Activated CD8-positive, alpha-beta memory T cell treated with anti-CD3 and anti-CD28 coated beads, Interleukin-2, amount 10 ng/mL, durations not matched to agents 7 days and 5 days (primary cell): ENCODE measurements at regions of chr4 and their contacts with region 1.

Region 1: GRCh38 chr4:88211473-88212252 is 53.2 kb upstream of the ABCG2 start:
- DNase-seq: peak; percentile 61
- ATAC-seq: peak; percentile 53
- H3K4me3 Mint-ChIP-seq: no peak overlapping the region
- H3K27ac Mint-ChIP-seq: no peak overlapping the region
- H3K4me1 Mint-ChIP-seq: peaks cover 7% of the 10 kb centered on the region
- H3K27me3 Mint-ChIP-seq: peaks cover 10% of the 10 kb centered on the region

Region 2: GRCh38 chr4:87848622-87849351 is 362.9 kb before region 1 on chr4:
- CTCF ChIA-PET with region 1: interaction called, 22 read pairs
- DNase-seq: peak; percentile 54
- ATAC-seq: peak; percentile 94
- H3K4me3 Mint-ChIP-seq: peak overlapping the region; percentile 21
- H3K27ac Mint-ChIP-seq: no peak overlapping the region
- H3K4me1 Mint-ChIP-seq: peaks cover 13% of the 10 kb centered on the region
- H3K27me3 Mint-ChIP-seq: peaks cover 40% of the 10 kb centered on the region

Region 3: GRCh38 chr4:88027611-88028608 is 183.8 kb before region 1 on chr4:
- CTCF ChIA-PET with region 1: interaction called, 64 read pairs
- DNase-seq: no peak
- ATAC-seq: no peak
- H3K4me3 Mint-ChIP-seq: no peak overlapping the region
- H3K27ac Mint-ChIP-seq: no peak overlapping the region
- H3K4me1 Mint-ChIP-seq: peaks cover 10% of the 10 kb centered on the region
- H3K27me3 Mint-ChIP-seq: no peaks in the 10 kb centered on the region

Region 4: DNA sequence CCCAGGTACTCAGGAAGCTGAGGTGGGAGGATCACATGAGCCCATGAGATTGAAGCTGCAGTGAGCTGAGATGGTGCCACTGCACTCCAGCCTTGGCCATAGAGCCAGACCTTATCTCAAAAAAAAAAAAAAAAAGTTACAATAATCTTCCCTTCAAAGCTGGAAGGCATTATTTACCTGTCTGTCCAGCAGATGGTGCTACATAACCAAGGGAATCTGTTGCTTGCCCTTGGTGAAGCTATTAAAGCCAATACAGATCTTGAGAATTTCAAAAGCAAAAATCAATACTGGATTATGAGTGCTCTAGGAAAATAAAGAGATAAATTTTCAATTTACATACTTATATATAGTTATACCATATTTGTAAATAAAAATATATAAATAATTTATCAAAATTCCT is 178.4 kb before region 1 on chr4:
- CTCF ChIA-PET with region 1: interaction called, 64 read pairs
- DNase-seq: peak; percentile 62
- ATAC-seq: peak; percentile 55
- H3K4me3 Mint-ChIP-seq: no peak overlapping the region
- H3K27ac Mint-ChIP-seq: no peak overlapping the region
- H3K4me1 Mint-ChIP-seq: peaks cover under 1% of the 10 kb centered on the region
- H3K27me3 Mint-ChIP-seq: no peaks in the 10 kb centered on the region

Region 5: GRCh38 chr4:88196013-88196365 is 15.7 kb before region 1 on chr4:
- CTCF ChIA-PET with region 1: interaction called, 12 read pairs
- DNase-seq: no peak
- ATAC-seq: no peak
- H3K4me3 Mint-ChIP-seq: no peak overlapping the region
- H3K27ac Mint-ChIP-seq: no peak overlapping the region
- H3K4me1 Mint-ChIP-seq: peaks cover 8% of the 10 kb centered on the region
- H3K27me3 Mint-ChIP-seq: peaks cover 3% of the 10 kb centered on the region

Region 6: GRCh38 chr4:88457307-88458103 is 245.8 kb after region 1 on chr4:
- CTCF ChIA-PET with region 1: no interaction called
- DNase-seq: peak; percentile 63
- ATAC-seq: peak; percentile 49
- H3K4me3 Mint-ChIP-seq: peak overlapping the region; percentile 81
- H3K27ac Mint-ChIP-seq: peak overlapping the region; percentile 100
- H3K4me1 Mint-ChIP-seq: peaks cover 58% of the 10 kb centered on the region
- H3K27me3 Mint-ChIP-seq: no peaks in the 10 kb centered on the region

Region 7: GRCh38 chr4:88514557-88515511 is 303.2 kb after region 1 on chr4:
- CTCF ChIA-PET with region 1: interaction called, 117 read pairs
- DNase-seq: no peak
- ATAC-seq: no peak
- H3K4me3 Mint-ChIP-seq: no peak overlapping the region
- H3K27ac Mint-ChIP-seq: no peak overlapping the region
- H3K4me1 Mint-ChIP-seq: no peaks in the 10 kb centered on the region
- H3K27me3 Mint-ChIP-seq: no peaks in the 10 kb centered on the region

Region 8: GRCh38 chr4:88523325-88524129 is 311.9 kb after region 1 on chr4 and contains the start of gene PYURF:
- CTCF ChIA-PET with region 1: interaction called, 117 read pairs
- DNase-seq: peak; percentile 87
- ATAC-seq: peak; percentile 87
- H3K4me3 Mint-ChIP-seq: peak within 1 kb of the TSS; percentile 91
- H3K27ac Mint-ChIP-seq: peak within 1 kb of the TSS; percentile 83
- H3K4me1 Mint-ChIP-seq: peaks cover 49% of the 10 kb centered on the region
- H3K27me3 Mint-ChIP-seq: no peaks in the 10 kb centered on the region
- total RNA-seq, gene PYURF: 44.3 to 51.2 TPM